WTC11 (cell line): ENCODE measurements at regions of chr14 and their contacts with region 1.

Region 1: DNA sequence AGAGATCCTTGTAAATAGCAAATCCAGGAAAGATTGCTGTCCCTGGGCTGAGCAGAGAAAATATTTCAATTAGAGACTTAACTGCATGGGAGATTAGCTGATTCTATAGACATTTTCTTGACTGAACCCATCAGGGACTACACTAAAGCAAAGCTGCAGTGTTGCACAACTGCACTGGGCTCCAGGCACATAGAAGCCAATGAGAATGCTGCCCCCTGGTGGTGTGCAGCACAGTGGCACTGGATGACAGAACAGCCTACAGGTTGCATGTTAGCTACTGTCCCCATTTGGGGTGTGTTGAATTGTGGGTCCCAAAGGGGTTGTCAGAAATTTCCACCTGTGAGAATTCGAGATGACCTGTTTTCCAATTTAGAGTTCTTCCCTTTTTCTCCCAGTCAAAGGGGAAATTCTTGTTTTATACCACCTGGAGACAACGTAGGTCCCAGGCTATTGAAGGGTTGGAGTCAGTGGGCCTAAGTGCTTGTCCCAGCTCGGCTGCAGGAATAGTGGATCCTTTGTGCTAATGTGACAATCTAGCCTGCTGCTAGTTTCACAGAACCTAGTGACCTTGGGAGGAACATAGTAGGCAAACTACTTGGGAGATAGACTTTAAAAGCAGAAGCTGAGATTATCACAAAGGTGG is 114.7 kb downstream of the SLC8A3 start:
- DNase-seq: peak; percentile 80
- ATAC-seq: peak; percentile 94
- H3K4me3 Mint-ChIP-seq: no peak overlapping the region
- H3K27ac Mint-ChIP-seq: no peak overlapping the region
- H3K4me1 Mint-ChIP-seq: peaks cover 18% of the 10 kb centered on the region
- H3K27me3 Mint-ChIP-seq: no peaks in the 10 kb centered on the region
- CTCF ChIP-seq: peak; percentile 93

Region 2: DNA sequence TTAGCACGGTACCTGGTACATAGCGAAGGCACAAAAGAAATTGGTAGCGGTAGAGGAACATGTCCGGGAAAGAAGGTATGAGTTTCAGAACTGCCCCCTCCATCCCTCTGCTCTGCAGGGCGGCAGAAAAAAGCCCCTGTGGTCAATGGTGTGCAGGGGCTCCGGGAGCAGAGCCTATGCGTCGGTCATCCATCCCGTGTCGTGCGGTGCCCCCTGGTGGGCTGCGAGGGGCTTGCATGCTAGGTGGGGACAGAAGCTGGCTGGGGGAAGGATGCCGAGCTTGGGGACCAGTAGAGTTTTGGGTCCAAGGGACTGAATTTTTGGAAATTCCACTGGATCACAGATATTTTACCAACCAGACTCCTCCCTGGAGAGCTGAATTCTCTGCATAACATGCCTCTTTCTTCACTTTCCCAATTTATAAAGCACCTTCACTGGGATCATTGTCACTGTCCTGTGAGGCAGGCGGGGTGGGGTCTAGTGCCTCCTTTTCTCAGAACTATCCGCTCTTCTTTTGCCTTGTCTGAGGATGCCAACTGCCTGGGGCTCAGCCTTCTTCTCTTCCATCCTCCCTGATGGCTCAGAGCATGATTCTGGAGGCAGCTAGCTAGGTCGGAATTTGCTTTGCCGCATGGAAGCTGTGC is 46.1 kb before region 1 on chr14:
- CTCF ChIA-PET with region 1: interaction called, 15 read pairs
- POLR2A ChIA-PET with region 1: no interaction called
- DNase-seq: peak; percentile 91
- ATAC-seq: peak; percentile 87
- H3K4me3 Mint-ChIP-seq: no peak overlapping the region
- H3K27ac Mint-ChIP-seq: no peak overlapping the region
- H3K4me1 Mint-ChIP-seq: peaks cover 13% of the 10 kb centered on the region
- H3K27me3 Mint-ChIP-seq: no peaks in the 10 kb centered on the region; the same call in 1 of the 2 replicates
- CTCF ChIP-seq: peak; percentile 97

Region 3: DNA sequence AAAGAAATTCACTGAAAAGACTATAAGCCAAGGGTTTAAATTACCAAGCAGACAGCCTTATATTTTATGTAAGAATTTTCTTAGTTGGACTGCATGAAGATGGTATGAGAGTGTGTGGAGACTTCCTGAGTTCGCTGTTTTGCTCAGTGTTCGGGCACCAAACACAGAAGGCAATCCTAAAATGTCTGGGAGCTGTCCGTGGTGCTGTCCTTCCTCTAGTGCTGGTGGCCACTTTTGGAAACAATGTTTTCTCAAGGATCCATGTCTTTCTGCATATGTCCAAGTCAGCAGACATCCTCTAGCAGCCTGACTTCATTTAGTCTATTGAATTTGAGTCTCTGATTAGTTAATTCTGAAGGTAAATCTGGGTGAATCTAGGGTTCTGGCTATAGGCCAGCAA is 21.1 kb before region 1 on chr14:
- CTCF ChIA-PET with region 1: interaction called, 49 read pairs
- POLR2A ChIA-PET with region 1: no interaction called
- DNase-seq: peak; percentile 57
- ATAC-seq: no peak
- H3K4me3 Mint-ChIP-seq: no peak overlapping the region
- H3K27ac Mint-ChIP-seq: no peak overlapping the region
- H3K4me1 Mint-ChIP-seq: peaks cover 8% of the 10 kb centered on the region
- H3K27me3 Mint-ChIP-seq: peaks cover 2% of the 10 kb centered on the region; the same call in 1 of the 2 replicates
- CTCF ChIP-seq: no peak

Region 4: DNA sequence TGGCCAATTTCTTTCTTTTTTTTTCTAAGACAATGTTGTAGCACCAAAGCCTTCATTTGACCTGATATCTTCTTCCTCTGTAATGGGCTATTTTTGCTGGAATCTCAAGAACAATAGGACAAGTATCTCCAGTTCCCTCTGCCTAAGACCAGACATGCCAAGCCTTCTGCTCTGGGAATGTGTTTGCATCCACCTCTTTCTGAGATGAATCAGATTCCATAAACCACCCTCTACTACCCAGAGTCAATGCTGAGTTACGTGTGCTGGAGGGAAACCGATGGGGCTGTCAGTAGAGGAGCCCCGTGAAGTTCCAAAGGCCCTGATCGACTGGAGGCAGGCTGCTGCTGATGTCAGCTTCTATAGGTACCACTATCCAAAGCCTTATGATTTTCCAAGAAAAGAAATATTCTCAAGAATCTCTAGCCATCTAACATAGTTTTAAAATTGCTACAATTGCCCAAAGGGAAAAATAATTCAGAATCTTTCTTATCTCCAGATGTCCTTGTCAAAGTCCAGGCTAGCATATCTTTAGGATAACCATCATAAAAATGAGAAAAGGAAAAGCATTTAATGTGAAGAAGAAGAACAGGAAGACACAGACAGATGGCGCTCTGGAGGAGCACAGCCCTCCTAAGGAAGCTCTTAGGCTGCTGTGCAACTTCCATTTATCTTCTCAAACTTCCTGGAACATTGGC is 12.8 kb after region 1 on chr14:
- CTCF ChIA-PET with region 1: interaction called, 29 read pairs
- POLR2A ChIA-PET with region 1: no interaction called
- DNase-seq: peak; percentile 30
- ATAC-seq: peak; percentile 72
- H3K4me3 Mint-ChIP-seq: no peak overlapping the region
- H3K27ac Mint-ChIP-seq: no peak overlapping the region
- H3K4me1 Mint-ChIP-seq: no peaks in the 10 kb centered on the region
- H3K27me3 Mint-ChIP-seq: peaks cover 3% of the 10 kb centered on the region; the same call in 1 of the 2 replicates
- CTCF ChIP-seq: 0 out of 2 replicates have a peak, but pooled peaks have one; percentile 25

Region 5: DNA sequence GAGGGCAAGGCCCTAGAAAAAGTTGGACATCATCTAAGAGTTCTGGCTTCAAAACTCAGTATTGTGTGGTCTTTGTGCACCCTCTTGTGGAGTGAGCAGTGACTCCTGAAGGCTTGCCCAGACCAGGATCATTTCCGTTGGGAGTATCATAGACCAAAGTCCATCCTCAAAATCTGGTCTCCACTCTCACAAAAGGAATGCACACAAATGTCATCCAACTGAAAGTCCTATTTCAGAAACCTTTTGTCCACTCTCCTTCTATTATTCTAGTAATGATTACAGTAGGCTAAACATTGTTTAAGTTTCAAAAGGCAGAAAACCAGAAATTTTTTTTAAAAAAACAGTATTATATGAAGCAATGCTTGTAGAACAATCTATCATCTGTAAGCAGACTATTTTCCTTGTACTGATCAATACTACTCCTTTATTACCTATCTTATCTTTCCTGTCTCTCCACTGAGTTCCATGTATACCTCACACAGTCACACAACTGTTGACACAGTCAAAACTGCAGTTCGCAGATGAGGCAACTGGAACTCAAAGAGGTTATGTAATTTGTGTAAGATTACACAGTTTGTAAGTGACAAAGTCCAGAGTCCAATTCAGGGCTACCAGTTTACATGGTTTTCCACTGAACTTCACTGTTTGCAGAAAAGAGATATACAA is 244.1 kb after region 1 on chr14:
- CTCF ChIA-PET with region 1: interaction called, 16 read pairs
- POLR2A ChIA-PET with region 1: no interaction called
- DNase-seq: peak; percentile 49
- ATAC-seq: peak; percentile 91
- H3K4me3 Mint-ChIP-seq: no peak overlapping the region
- H3K27ac Mint-ChIP-seq: no peak overlapping the region
- H3K4me1 Mint-ChIP-seq: peaks cover 6% of the 10 kb centered on the region
- H3K27me3 Mint-ChIP-seq: no peaks in the 10 kb centered on the region
- CTCF ChIP-seq: peak; percentile 49; the same call in 1 of the 2 replicates